Colonic mucosa (tissue), 4 donors: ENCODE measurements at regions of chr6 and their contacts with region 1.

Region 1: GRCh38 chr6:82251942-82252341 is 4.4 kb upstream of the IBTK start:
- DNase-seq: no peak
- H3K4me3 ChIP-seq: no peak overlapping the region
- H3K27ac ChIP-seq: no peak overlapping the region
- H3K4me1 ChIP-seq: no peaks in the 10 kb centered on the region
- H3K27me3 ChIP-seq: no peaks in the 10 kb centered on the region
- CTCF ChIP-seq: peak; percentile 34

Region 2: DNA sequence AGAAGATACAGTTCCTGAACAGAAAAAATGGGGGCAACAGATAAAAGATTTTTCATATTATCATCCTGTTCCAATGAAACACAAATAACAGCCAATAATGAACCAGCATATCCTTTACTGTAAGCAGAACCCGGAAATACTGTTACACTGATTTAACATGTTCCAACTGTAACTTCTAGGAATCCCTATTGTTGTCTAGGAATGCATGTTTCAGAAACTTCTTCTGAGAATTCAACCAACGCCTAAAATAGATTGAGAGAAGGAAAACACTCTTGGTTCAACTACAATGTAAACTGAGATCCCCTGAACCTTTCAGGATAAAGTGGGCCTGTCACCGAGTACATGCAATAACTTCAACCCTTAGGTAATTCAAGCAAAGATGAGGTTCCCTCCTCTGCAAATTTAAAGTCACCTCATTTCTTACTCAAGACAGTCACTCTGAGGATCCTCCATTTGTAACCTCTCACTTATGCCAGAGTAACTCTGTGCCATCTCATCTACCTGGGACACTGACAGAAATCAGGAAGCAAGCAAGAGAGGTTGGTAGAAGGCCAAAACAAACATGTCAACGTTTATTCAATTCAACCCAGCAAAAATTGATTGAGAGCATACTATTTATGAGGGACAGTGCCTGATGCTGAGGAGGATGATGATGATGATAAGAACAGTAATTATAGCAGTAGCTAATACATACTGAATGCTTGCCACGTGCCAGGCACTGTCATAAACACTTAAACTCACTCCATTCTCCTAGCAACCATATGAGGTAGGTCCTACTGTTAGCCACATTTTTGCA is 799.6 kb after region 1 on chr6:
- intact Hi-C with region 1: loop called (anchors 5 kb)
- DNase-seq: no peak
- H3K4me3 ChIP-seq: no peak overlapping the region
- H3K27ac ChIP-seq: no peak overlapping the region
- H3K4me1 ChIP-seq: no peaks in the 10 kb centered on the region
- H3K27me3 ChIP-seq: no peaks in the 10 kb centered on the region
- CTCF ChIP-seq: no peak

Region 3: DNA sequence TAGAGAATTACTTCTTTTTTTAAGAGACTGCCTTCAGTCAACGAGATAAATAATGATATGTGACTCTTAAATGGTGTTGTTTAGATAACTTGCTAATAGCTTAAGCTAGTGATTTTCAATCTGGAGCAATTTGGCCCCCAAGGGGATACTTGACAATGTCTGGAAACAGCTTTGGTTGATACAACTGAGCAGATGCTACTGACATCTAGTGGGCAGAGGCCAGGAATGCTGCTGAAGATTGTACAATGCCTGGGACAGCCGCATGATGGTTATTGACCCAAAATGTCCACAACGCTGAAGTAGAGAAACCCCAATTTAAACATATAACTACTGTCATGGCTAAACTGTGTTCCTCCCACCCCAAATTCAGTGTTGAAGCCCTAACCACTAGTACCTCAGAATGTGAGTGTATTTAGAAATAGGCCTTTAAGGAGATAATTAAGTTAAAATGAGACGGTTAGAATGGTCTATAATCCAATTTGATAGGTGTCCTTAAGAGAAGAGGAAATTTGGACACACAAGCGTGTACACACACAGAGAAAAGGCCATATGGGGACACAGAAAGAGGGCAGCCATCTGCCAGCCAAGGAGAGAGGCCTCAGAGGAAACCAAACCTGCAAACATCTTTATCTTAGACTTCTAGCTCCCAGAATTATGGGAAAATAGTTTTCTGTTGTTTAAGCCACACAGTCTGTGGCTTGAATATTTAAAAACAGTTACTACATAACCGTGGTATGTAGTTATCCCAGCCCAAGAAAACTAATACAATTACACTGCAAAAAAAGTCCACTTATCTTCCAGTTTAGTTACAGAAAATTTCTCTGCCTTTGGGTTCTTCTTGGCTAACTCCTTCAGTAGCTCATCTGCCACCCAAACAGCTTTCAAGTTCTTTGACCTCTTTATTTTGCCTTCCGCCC is 963.4 kb after region 1 on chr6:
- intact Hi-C with region 1: loop called (anchors 10 kb)
- DNase-seq: peak; percentile 61
- H3K4me3 ChIP-seq: no peak overlapping the region
- H3K27ac ChIP-seq: no peak overlapping the region
- H3K4me1 ChIP-seq: no peaks in the 10 kb centered on the region
- H3K27me3 ChIP-seq: no peaks in the 10 kb centered on the region
- CTCF ChIP-seq: peak; percentile 70